ENCODE measurements at regions of chrX and their contacts with region 1.

Region 1: GRCh38 chrX:138794246-138794645 is 82.7 kb upstream of the FGF13 start:
- DNase-seq: no peak
- ATAC-seq: no peak
- H3K4me3 ChIP-seq: no peak overlapping the region
- H3K27ac ChIP-seq: no peak overlapping the region
- H3K4me1 ChIP-seq: no peaks in the 10 kb centered on the region
- H3K27me3 ChIP-seq: no peaks in the 10 kb centered on the region
- CTCF ChIP-seq: no peak

Region 2: GRCh38 chrX:138740341-138740740 is 53.9 kb before region 1 on chrX:
- CTCF ChIA-PET with region 1: no interaction called
- POLR2A ChIA-PET with region 1: no interaction called
- in situ Hi-C with region 1: no loop called
- intact Hi-C with region 1: no loop called
- DNase-seq: no peak
- ATAC-seq: no peak
- H3K4me3 ChIP-seq: no peak overlapping the region
- H3K27ac ChIP-seq: no peak overlapping the region
- H3K4me1 ChIP-seq: no peaks in the 10 kb centered on the region
- H3K27me3 ChIP-seq: 0 out of 2 replicates have a peak, but pooled peaks cover 2% of the 10 kb centered on the region
- CTCF ChIP-seq: no peak

Region 3: GRCh38 chrX:138858438-138858837 is 64.2 kb after region 1 on chrX:
- CTCF ChIA-PET with region 1: no interaction called
- POLR2A ChIA-PET with region 1: no interaction called
- in situ Hi-C with region 1: no loop called
- intact Hi-C with region 1: loop called (anchors 10 kb)
- DNase-seq: no peak
- ATAC-seq: no peak
- H3K4me3 ChIP-seq: no peak overlapping the region
- H3K27ac ChIP-seq: no peak overlapping the region
- H3K4me1 ChIP-seq: no peaks in the 10 kb centered on the region
- H3K27me3 ChIP-seq: no peaks in the 10 kb centered on the region
- CTCF ChIP-seq: no peak

Region 4: DNA sequence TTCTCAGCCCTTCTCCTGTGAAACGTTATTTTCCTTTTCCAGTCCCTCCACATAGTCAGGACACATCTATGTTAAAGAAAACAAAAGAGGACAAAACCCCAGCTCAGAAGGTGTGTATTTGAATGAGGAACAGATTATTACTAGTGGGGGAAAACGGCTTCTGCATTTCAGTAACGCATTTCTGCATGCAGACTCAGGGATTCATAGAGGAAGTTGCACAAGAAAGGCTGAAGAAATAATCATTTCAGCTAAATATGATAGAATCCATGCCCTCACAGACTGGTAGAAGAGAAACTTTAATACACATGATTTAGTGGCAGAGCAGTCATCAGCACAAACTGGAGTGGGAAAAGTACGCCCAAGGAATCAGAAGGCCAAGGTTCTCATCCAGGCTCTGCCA is 188.1 kb after region 1 on chrX:
- CTCF ChIA-PET with region 1: no interaction called
- POLR2A ChIA-PET with region 1: no interaction called
- in situ Hi-C with region 1: no loop called
- intact Hi-C with region 1: no loop called
- DNase-seq: no peak
- ATAC-seq: no peak
- H3K4me3 ChIP-seq: no peak overlapping the region
- H3K27ac ChIP-seq: no peak overlapping the region
- H3K4me1 ChIP-seq: no peaks in the 10 kb centered on the region
- H3K27me3 ChIP-seq: no peaks in the 10 kb centered on the region
- CTCF ChIP-seq: no peak

Region 5: DNA sequence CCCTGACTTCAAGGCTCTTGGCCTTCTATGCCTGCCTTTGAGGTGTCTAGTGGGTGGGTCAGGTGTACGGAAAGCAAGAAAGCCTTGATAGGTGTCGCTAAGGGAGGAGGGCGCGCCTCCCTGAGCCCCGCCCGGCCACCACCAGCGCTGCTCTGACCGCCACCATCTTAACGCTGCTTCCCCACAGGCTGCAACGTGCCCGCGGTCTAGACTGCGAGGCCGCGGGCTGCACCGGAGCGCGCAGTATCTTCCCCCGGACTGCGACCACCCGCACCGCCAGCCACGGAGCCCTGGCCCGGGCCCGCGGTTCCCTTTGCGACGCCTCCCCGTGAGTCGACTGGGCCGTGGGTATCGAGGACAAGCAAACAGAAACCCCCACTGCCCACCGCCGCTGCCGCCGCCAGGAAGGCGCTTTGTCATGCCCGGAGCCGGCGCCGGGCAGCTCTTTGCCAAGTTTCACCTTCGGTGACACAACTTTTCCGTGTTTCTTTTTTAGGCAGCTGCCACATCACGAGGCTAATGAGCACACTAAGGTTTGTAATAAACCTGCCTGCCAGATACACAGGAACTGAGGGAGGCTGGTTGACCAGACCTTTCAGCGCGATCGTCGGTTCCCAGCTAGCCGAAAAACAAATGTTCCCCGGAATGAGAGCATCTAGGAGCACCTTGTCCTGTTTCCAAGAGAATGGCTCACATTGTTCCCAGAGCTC is 400.5 kb after region 1 on chrX:
- CTCF ChIA-PET with region 1: no interaction called
- POLR2A ChIA-PET with region 1: no interaction called
- in situ Hi-C with region 1: no loop called
- intact Hi-C with region 1: no loop called
- DNase-seq: no peak
- ATAC-seq: peak; percentile 95
- H3K4me3 ChIP-seq: peak overlapping the region; percentile 41 to 51
- H3K27ac ChIP-seq: no peak overlapping the region
- H3K4me1 ChIP-seq: no peaks in the 10 kb centered on the region; the same call in 1 of the 2 replicates
- H3K27me3 ChIP-seq: peaks cover 32% of the 10 kb centered on the region
- CTCF ChIP-seq: no peak

Measured in Panc1 (cell line).